Panc1 (cell line): ENCODE measurements at regions of chr10 and their contacts with region 1.

Region 1: DNA sequence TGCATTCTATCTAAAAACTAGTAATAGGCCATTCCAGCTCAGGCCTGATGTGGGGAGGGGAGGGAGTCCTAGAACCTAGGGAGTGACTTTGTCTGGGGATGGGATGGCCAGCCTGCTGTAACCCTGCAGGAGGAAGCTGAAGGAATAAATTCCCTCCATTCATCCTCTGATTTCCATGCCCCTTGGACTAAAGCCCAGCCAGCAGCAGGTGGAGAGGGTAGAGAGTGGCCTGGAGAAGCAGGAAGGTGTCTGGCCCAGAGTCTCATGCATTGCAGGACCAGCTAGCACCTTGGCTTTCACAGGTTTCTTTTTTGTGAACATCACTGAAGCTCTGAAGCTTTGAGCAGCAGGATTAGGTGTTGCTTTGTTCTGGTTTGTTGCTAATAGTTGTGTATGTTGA is 32.8 kb upstream of the CDH23 start:
- DNase-seq: no peak
- ATAC-seq: no peak
- H3K4me3 ChIP-seq: no peak overlapping the region
- H3K27ac ChIP-seq: no peak overlapping the region
- H3K4me1 ChIP-seq: no peaks in the 10 kb centered on the region
- H3K27me3 ChIP-seq: no peaks in the 10 kb centered on the region
- CTCF ChIP-seq: no peak

Region 2: DNA sequence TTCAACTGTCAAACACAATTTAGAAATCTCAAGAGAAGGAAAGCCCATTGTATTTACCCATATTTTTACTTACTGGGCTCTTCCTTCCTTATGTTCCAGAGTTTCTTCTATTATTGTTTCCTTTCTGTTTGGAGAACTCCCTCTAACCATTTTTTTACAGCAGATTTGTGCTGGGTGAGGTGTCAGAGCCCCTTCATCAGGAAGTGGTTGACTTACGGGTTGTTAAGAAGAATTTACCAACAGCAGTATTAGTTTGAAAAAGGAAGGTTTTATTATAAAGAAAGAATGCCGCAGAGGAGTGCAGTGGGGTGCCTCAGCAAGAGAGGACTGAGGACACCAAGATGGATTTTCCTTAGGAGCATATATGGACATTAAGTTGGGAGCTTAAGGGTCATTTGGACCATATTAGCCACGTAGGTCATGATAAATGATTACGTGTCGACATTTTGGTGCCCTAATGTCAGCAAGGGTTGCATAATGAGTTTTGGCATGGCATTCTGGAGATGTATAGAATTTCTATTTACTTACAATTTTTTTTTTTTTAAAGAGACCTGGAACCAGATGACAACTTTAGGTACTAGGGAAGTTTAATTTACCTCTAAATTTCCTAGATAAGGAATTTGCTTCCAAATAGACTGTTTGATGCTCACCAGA is 572.4 kb before region 1 on chr10:
- CTCF ChIA-PET with region 1: no interaction called
- POLR2A ChIA-PET with region 1: no interaction called
- in situ Hi-C with region 1: no loop called
- intact Hi-C with region 1: no loop called
- DNase-seq: no peak
- ATAC-seq: no peak
- H3K4me3 ChIP-seq: no peak overlapping the region
- H3K27ac ChIP-seq: no peak overlapping the region
- H3K4me1 ChIP-seq: no peaks in the 10 kb centered on the region
- H3K27me3 ChIP-seq: peaks cover 36% of the 10 kb centered on the region
- CTCF ChIP-seq: no peak

Region 3: DNA sequence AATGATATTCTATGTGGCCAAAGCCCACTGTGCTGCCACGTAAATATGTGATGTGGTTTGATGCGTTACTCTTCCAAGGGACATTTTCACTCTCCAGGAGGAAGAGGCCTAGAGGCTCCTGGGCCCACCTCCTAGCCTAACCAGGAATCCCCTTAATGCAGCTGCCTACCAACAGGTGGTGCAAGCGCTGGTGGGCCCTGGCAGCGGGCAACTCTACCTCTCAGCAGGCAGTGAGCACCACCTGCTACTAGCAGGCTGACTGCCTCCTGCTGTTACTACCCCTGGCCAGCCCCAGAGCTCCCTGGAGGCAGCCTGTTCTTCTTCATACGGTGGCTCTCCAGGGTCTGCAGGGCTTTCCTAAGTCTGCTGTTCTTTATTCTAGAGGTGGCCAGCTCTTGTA is 95.6 kb after region 1 on chr10:
- CTCF ChIA-PET with region 1: no interaction called
- POLR2A ChIA-PET with region 1: no interaction called
- in situ Hi-C with region 1: no loop called
- intact Hi-C with region 1: no loop called
- DNase-seq: no peak
- ATAC-seq: peak; percentile 31; the same call in 1 of the 2 replicates
- H3K4me3 ChIP-seq: no peak overlapping the region
- H3K27ac ChIP-seq: no peak overlapping the region
- H3K4me1 ChIP-seq: no peaks in the 10 kb centered on the region
- H3K27me3 ChIP-seq: peaks cover 12% of the 10 kb centered on the region
- CTCF ChIP-seq: no peak

Region 4: GRCh38 chr10:72058989-72059842 is 695.3 kb after region 1 on chr10:
- CTCF ChIA-PET with region 1: no interaction called
- POLR2A ChIA-PET with region 1: interaction called, 15 read pairs
- in situ Hi-C with region 1: no loop called
- intact Hi-C with region 1: no loop called
- DNase-seq: no peak
- ATAC-seq: no peak
- H3K4me3 ChIP-seq: no peak overlapping the region
- H3K27ac ChIP-seq: peak overlapping the region; percentile 36; the same call in 1 of the 2 replicates
- H3K4me1 ChIP-seq: peaks cover 38% of the 10 kb centered on the region
- H3K27me3 ChIP-seq: no peaks in the 10 kb centered on the region
- CTCF ChIP-seq: no peak